ENCODE measurements at regions of chr7 and their contacts with region 1.

Region 1: DNA sequence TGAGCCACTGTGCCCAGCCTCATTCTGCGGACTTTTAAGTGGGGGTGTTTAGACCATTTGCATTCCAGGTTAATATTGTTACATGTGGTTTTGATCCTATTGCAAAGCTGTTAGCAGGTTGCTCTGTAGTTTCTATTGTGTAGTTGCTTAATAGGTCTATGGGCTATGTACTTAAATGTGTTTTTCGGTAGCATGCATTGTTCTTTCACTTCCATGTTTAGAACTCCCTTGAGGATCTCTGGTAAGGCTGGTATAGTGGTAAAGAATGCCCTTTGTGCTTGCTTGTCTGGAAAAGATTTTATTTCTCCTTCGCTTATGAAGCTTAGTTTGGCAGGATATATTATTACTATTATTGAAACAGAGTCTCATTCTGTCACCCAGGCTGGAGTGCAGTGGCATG is 13.4 kb upstream of the LRRD1 start:
- DNase-seq: no peak
- H3K4me3 ChIP-seq: no peak overlapping the region
- H3K4me3 Mint-ChIP-seq: no peak overlapping the region
- H3K27ac ChIP-seq: no peak overlapping the region
- H3K27ac Mint-ChIP-seq: no peak overlapping the region
- H3K4me1 ChIP-seq: no peaks in the 10 kb centered on the region
- H3K4me1 Mint-ChIP-seq: no peaks in the 10 kb centered on the region
- H3K27me3 ChIP-seq: no peaks in the 10 kb centered on the region
- H3K27me3 Mint-ChIP-seq: no peaks in the 10 kb centered on the region

Region 2: GRCh38 chr7:92095380-92095779 is 96.9 kb before region 1 on chr7:
- CTCF ChIA-PET with region 1: no interaction called
- POLR2A ChIA-PET with region 1: no interaction called
- intact Hi-C with region 1: no loop called
- DNase-seq: no peak
- H3K4me3 ChIP-seq: no peak overlapping the region
- H3K4me3 Mint-ChIP-seq: no peak overlapping the region
- H3K27ac ChIP-seq: no peak overlapping the region
- H3K27ac Mint-ChIP-seq: peak overlapping the region in 2 of 7 donors; percentile 30 to 46
- H3K4me1 ChIP-seq: no peaks in the 10 kb centered on the region
- H3K4me1 Mint-ChIP-seq: peaks cover 0 to 1% (median 0%) of the 10 kb centered on the region in 4 donors
- H3K27me3 ChIP-seq: no peaks in the 10 kb centered on the region
- H3K27me3 Mint-ChIP-seq: no peaks in the 10 kb centered on the region

Region 3: GRCh38 chr7:92178927-92179924 is 13.1 kb before region 1 on chr7 and contains the start of gene LRRD1:
- CTCF ChIA-PET with region 1: interaction called, 15 read pairs
- POLR2A ChIA-PET with region 1: no interaction called
- intact Hi-C with region 1: no loop called
- DNase-seq: peak; percentile 85 to 89 (median 88)
- H3K4me3 ChIP-seq: peak within 1 kb of the TSS in 1 of 2 donors; percentile 36
- H3K4me3 Mint-ChIP-seq: peak within 1 kb of the TSS; percentile 77 to 85 (median 80)
- H3K27ac ChIP-seq: peak within 1 kb of the TSS; percentile 2
- H3K27ac Mint-ChIP-seq: peak within 1 kb of the TSS in 4 of 7 donors; percentile 13 to 59 (median 40)
- H3K4me1 ChIP-seq: no peaks in the 10 kb centered on the region
- H3K4me1 Mint-ChIP-seq: peaks cover 2 to 8% (median 3%) of the 10 kb centered on the region in 4 donors
- H3K27me3 ChIP-seq: no peaks in the 10 kb centered on the region
- H3K27me3 Mint-ChIP-seq: no peaks in the 10 kb centered on the region
- total RNA-seq, gene LRRD1: not detected

Region 4: DNA sequence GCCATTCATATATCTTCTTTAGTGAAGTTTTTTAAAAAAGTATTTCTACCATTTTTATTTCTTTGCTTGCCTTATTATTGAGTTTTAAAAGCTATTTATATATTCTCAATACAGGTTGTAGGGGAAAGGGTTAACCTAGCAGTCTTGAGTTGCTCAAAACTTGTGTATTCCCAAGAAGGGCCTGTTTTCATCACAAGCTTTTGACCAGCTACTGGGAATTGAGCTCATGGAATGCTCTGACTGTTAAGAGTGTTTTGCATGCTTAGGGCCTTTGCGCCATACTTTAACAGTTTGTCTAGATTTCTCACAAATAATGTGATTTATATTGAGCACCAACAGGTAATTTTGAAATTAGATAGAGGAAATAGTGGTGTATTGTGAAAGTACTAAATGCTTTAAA is 1454.2 kb after region 1 on chr7:
- CTCF ChIA-PET with region 1: no interaction called
- POLR2A ChIA-PET with region 1: no interaction called
- intact Hi-C with region 1: no loop called
- DNase-seq: no peak
- H3K4me3 ChIP-seq: no peak overlapping the region
- H3K4me3 Mint-ChIP-seq: no peak overlapping the region
- H3K27ac ChIP-seq: no peak overlapping the region
- H3K27ac Mint-ChIP-seq: no peak overlapping the region
- H3K4me1 ChIP-seq: no peaks in the 10 kb centered on the region
- H3K4me1 Mint-ChIP-seq: no peaks in the 10 kb centered on the region
- H3K27me3 ChIP-seq: no peaks in the 10 kb centered on the region
- H3K27me3 Mint-ChIP-seq: no peaks in the 10 kb centered on the region